Naive thymus-derived CD4-positive, alpha-beta T cell (primary cell): ENCODE measurements at regions of chr10 and their contacts with region 1.

Region 1: DNA sequence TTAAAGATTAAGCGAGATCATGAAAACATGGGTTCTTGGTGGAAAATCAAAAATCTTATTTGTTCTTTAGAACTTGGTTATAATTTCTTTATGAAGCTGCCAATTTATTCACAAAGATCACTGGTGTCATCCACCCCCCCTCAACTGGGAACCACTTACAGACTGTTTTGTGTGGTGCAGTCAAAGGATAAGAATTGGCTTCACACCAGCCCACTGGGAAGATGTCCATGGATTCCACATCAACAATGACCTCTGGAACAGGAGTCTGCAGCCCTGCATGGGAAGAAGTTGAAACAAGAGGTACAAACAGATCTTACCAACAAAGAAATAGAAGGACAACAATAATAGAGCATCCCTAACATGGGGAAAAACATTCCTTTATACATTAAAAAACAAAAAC is 205.2 kb downstream of the SFMBT2 start:
- DNase-seq: no peak
- ATAC-seq: no peak
- H3K4me3 ChIP-seq: no peak overlapping the region
- H3K4me3 Mint-ChIP-seq: no peak overlapping the region
- H3K27ac ChIP-seq: no peak overlapping the region
- H3K27ac Mint-ChIP-seq: peak overlapping the region in 4 of 9 donors; percentile 1 to 62 (median 32)
- H3K4me1 ChIP-seq: no peaks in the 10 kb centered on the region
- H3K4me1 Mint-ChIP-seq: peaks cover 3 to 10% (median 5%) of the 10 kb centered on the region in 7 donors
- H3K27me3 ChIP-seq: no peaks in the 10 kb centered on the region
- H3K27me3 Mint-ChIP-seq: no peaks in the 10 kb centered on the region

Region 2: GRCh38 chr10:7243873-7244272 is 38.2 kb after region 1 on chr10:
- CTCF ChIA-PET with region 1: no interaction called
- POLR2A ChIA-PET with region 1: no interaction called
- intact Hi-C with region 1: loop called in 1 of 2 experiments (anchors 5 kb)
- DNase-seq: peak in 1 of 9 donors; percentile 22
- ATAC-seq: peak; percentile 79
- H3K4me3 ChIP-seq: no peak overlapping the region
- H3K4me3 Mint-ChIP-seq: peak overlapping the region in 9 of 10 donors; percentile 9 to 80 (median 48)
- H3K27ac ChIP-seq: no peak overlapping the region
- H3K27ac Mint-ChIP-seq: peak overlapping the region; percentile 56 to 91 (median 77)
- H3K4me1 ChIP-seq: peaks cover 9 to 16% of the 10 kb centered on the region in 2 donors
- H3K4me1 Mint-ChIP-seq: peaks cover 30 to 65% (median 51%) of the 10 kb centered on the region in 7 donors
- H3K27me3 ChIP-seq: no peaks in the 10 kb centered on the region
- H3K27me3 Mint-ChIP-seq: no peaks in the 10 kb centered on the region

Region 3: GRCh38 chr10:7410862-7411670 is 205.4 kb after region 1 on chr10 and contains the start of gene SFMBT2:
- CTCF ChIA-PET with region 1: no interaction called
- POLR2A ChIA-PET with region 1: no interaction called
- intact Hi-C with region 1: no loop called
- DNase-seq: peak; percentile 45 to 71 (median 64)
- ATAC-seq: peak; percentile 61
- H3K4me3 ChIP-seq: peak within 1 kb of the TSS; percentile 92
- H3K4me3 Mint-ChIP-seq: peak within 1 kb of the TSS; percentile 93 to 100 (median 99)
- H3K27ac ChIP-seq: peak within 1 kb of the TSS; percentile 76
- H3K27ac Mint-ChIP-seq: peak within 1 kb of the TSS; percentile 93 to 99 (median 95)
- H3K4me1 ChIP-seq: peaks cover 18 to 28% of the 10 kb centered on the region in 2 donors
- H3K4me1 Mint-ChIP-seq: peaks cover 14 to 49% (median 37%) of the 10 kb centered on the region in 7 donors
- H3K27me3 ChIP-seq: no peaks in the 10 kb centered on the region
- H3K27me3 Mint-ChIP-seq: peaks cover 0 to 34% (median 0%) of the 10 kb centered on the region in 5 donors
- total RNA-seq, gene SFMBT2: 38.6 to 50.9 (median 40.9) TPM